ENCODE measurements at regions of chr4 and their contacts with region 1.

Region 1: GRCh38 chr4:185203486-185204237 is at the start of gene CFAP97:
- DNase-seq: peak; percentile 81 to 92 (median 88)
- H3K4me3 ChIP-seq: peak within 1 kb of the TSS; percentile 62 to 94 (median 83)
- H3K27ac ChIP-seq: peak within 1 kb of the TSS; percentile 83 to 99 (median 95)
- H3K27me3 ChIP-seq: no peaks in the 10 kb centered on the region
- CTCF ChIP-seq: peak in 27 of 56 donors; percentile 3 to 60 (median 24)
- total RNA-seq, gene CFAP97: 16.8 to 37.2 (median 26.7) TPM

Region 2: GRCh38 chr4:183659029-183659871 is 1544.4 kb before region 1 on chr4 and contains the starts of genes RWDD4 and TRAPPC11:
- intact Hi-C with region 1: loop called in 1 of 2 experiments (anchors 10 kb)
- DNase-seq: peak; percentile 96 to 99 (median 97)
- H3K4me3 ChIP-seq: peak within 1 kb of the TSS; percentile 46 to 97 (median 90)
- H3K27ac ChIP-seq: peak within 1 kb of the TSS in 58 of 59 donors; percentile 3 to 95 (median 86)
- H3K27me3 ChIP-seq: no peaks in the 10 kb centered on the region
- CTCF ChIP-seq: peak in 38 of 56 donors; percentile 7 to 56 (median 33)
- total RNA-seq, gene RWDD4: 6.1 to 15.7 (median 10.6) TPM
- total RNA-seq, gene TRAPPC11: 32.4 to 73.9 (median 52.2) TPM

Region 3: GRCh38 chr4:184039963-184040383 is 1163.7 kb before region 1 on chr4:
- intact Hi-C with region 1: no loop called
- DNase-seq: peak in 3 of 10 donors; percentile 18 to 31 (median 21)
- H3K4me3 ChIP-seq: peak overlapping the region in 45 of 59 donors; percentile 8 to 60 (median 35)
- H3K27ac ChIP-seq: peak overlapping the region in 1 of 59 donors; percentile 28
- H3K27me3 ChIP-seq: no peaks in the 10 kb centered on the region
- CTCF ChIP-seq: no peak

Region 4: DNA sequence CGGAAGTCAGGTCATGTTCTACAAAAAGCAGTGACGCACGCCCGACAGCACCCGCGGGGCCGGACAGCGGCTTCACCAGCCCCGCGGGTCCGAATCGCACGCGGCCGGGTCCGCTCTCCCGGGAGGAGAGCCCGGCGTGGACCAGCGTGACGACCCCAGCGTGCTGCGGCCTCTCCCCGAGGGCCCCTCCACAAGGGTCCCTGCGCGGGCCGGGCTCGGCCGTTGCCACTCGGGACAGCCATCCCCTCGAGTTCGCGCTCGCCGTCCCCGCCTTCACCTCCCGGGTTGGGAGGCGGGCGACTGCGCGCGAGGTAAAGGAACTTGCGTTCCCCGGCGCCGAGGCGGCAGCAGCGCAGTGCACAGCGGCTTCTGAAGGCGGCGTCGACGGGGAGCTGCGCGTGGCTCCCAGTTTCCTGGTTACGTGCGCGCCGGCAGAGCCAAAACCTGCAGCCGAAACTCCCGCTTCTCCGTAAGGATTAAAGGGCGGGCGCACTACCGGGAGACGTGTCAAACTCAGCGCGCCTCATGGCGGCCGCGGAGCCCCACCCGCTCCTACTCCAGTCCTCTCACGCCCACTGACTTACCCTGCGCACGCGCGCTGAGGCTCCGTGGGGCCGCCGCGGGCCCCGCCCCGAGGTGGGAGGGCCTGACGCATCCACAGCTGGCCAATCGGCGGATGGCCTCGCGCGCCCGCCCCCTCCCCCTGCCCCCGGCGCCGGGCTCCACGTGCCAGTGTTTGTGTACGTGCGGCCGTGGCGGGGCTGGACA is 192.5 kb after region 1 on chr4:
- intact Hi-C with region 1: loop called in 1 of 2 experiments (anchors 2 kb)
- DNase-seq: peak; percentile 96 to 99 (median 98)
- H3K4me3 ChIP-seq: peak overlapping the region; percentile 52 to 100 (median 87)
- H3K27ac ChIP-seq: peak overlapping the region; percentile 92 to 100 (median 100)
- H3K27me3 ChIP-seq: no peaks in the 10 kb centered on the region
- CTCF ChIP-seq: peak in 14 of 56 donors; percentile 5 to 28 (median 14)

Region 5: GRCh38 chr4:185425647-185426352 is 222.1 kb after region 1 on chr4 and contains the start of gene UFSP2:
- intact Hi-C with region 1: loop called in 1 of 2 experiments (anchors 10 kb)
- DNase-seq: peak; percentile 79 to 94 (median 88)
- H3K4me3 ChIP-seq: peak within 1 kb of the TSS; percentile 64 to 99 (median 89)
- H3K27ac ChIP-seq: peak within 1 kb of the TSS; percentile 79 to 100 (median 99)
- H3K27me3 ChIP-seq: no peaks in the 10 kb centered on the region
- CTCF ChIP-seq: peak in 23 of 56 donors; percentile 6 to 49 (median 15)
- total RNA-seq, gene UFSP2: 15.1 to 59.4 (median 31.0) TPM

Region 6: GRCh38 chr4:185597532-185598188 is 394.0 kb after region 1 on chr4:
- intact Hi-C with region 1: loop called in 1 of 2 experiments (anchors 10 kb)
- DNase-seq: peak in 9 of 10 donors; percentile 59 to 86 (median 76)
- H3K4me3 ChIP-seq: peak overlapping the region in 30 of 59 donors; percentile 0 to 57 (median 24)
- H3K27ac ChIP-seq: peak overlapping the region in 20 of 59 donors; percentile 2 to 66 (median 23)
- H3K27me3 ChIP-seq: no peaks in the 10 kb centered on the region
- CTCF ChIP-seq: peak; percentile 93 to 100 (median 99)